OCI-LY7 (cell line): ENCODE measurements at regions of chr3 and their contacts with region 1.

Region 1: GRCh38 chr3:142288032-142288638 is 62.8 kb upstream of the GK5 start:
- DNase-seq: peak; percentile 28
- H3K4me3 ChIP-seq: no peak overlapping the region
- H3K27ac ChIP-seq: no peak overlapping the region
- H3K4me1 ChIP-seq: no peaks in the 10 kb centered on the region
- CTCF ChIP-seq: no peak

Region 2: DNA sequence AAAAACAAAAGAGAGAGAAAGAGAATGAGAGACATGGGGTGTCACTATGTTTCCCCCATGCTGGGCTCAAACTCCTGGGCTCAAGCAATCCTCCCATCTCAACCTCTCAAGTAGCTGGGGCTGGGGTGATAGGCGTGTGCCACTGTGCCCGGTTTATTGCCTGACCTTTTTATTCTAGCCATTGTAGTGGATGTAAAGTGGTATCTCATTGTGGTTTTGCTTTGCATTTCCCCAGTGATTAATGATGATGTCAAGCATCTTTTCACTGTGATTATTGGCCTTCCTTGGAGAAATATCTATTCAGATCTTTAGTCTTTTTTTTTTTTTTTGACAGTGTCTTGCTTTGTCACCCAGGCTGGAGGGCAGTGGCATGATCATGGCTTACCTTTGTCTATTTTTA is 25.0 kb before region 1 on chr3:
- CTCF ChIA-PET with region 1: no interaction called
- POLR2A ChIA-PET with region 1: interaction called, 4 read pairs
- intact Hi-C with region 1: loop called (anchors 1 kb)
- DNase-seq: no peak
- H3K4me3 ChIP-seq: no peak overlapping the region
- H3K27ac ChIP-seq: no peak overlapping the region
- H3K4me1 ChIP-seq: no peaks in the 10 kb centered on the region
- CTCF ChIP-seq: no peak